Activated CD4-positive, alpha-beta T cell treated with anti-CD3 and anti-CD28 coated beads, Interleukin-2, amount 10 ng/mL, durations not matched to agents 24 days and 14 days (primary cell): ENCODE measurements at regions of chr12 and their contacts with region 1.

Region 1: GRCh38 chr12:11730299-11731041 is 81.0 kb downstream of the ETV6 start:
- DNase-seq: peak; percentile 69
- H3K4me3 Mint-ChIP-seq: peak overlapping the region; percentile 83
- H3K27ac Mint-ChIP-seq: peak overlapping the region; percentile 95
- H3K4me1 Mint-ChIP-seq: peaks cover 80% of the 10 kb centered on the region
- H3K27me3 Mint-ChIP-seq: no peaks in the 10 kb centered on the region

Region 2: DNA sequence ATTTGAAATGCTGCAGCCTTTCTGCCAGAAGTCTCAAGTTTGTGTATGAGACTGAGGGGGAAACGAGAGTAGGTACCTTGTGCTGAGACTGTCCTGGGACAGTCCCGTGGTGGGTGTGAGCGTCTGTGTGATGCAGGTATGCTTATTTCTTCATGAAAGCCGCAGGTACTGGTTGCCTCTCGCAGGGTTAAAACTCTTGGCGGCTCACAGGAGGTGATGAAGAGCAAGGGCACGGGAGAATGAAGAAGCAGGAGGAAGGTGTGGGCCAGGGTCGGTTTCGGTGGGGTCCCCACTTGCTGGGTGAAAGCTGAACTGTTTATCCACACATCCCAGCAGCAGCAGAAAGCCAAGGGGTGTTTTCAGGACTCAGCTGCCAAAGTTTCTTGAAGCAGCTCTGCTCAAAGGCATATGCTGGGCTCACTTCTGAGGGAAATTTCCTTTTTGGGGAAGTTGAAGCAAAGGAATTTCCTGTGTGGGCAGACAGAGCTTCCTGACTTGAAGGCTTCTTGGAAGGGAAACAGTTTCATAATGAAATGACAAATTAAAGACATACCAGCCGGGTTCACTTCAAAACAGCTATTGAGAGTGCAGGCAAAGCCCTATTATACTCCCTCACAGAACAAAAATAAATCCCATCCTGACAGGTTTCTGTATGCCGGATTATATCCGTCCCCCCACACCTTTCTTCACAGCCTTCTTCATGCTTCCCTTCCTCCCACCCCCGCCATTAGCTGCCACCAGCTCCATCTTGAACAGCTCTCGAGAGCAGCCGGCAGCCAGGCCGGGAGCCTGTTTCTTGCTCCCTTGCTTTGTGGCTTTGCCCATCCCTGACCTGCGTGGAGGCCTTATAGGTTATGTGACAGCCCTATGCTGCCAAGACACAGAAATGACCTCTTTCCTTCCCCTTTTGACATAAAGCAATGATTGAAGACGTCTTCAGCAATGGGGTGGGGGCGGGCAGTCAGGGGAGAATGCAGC is 35.6 kb after region 1 on chr12:
- intact Hi-C with region 1: loop called (anchors 1 kb)
- DNase-seq: peak; percentile 74
- H3K4me3 Mint-ChIP-seq: peak overlapping the region; percentile 69
- H3K27ac Mint-ChIP-seq: peak overlapping the region; percentile 95
- H3K4me1 Mint-ChIP-seq: peaks cover 90% of the 10 kb centered on the region
- H3K27me3 Mint-ChIP-seq: no peaks in the 10 kb centered on the region